ENCODE measurements at regions of chr17 and their contacts with region 1.

Region 1: DNA sequence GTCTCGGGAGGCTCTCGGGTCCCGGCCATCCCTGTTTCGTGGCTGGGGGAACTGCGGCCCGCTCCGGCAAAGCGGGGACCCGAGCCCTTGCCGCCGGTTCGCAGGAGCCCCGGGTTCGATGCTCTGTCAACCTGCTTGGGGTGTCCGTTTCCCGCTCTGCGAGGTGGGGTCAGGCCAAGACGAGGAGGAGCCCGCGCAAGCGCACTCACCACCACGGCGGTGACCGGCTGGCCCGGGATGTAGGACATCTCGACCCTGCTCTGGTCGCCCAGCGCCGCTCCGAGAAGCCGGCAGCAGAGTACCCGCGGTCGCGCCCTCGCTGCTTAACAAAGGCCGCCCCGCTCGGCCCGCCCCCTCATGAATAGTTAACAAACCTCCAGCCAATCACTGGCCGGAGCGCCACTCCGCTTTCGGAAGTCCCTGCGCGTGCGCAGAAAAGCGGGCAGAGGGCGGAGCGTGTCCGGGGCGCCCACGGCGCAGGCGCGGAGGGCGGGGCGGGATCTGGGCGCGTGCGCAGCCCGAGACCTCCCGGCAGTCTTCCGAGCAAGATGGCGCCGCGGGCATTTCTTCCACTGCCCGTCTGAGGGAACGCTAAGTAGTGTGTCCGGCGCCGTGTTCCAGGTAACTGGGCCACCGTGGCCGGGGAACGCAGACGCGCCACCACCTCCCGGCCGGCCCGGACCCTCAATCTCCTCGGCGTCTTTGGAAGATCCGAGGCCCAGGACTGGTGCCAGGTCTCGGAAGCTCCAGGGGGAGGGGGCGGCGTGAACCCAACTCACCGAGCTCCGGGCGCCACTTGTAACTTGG is at the starts of genes EMC6 and TAX1BP3:
- DNase-seq: peak; percentile 99 to 100
- ATAC-seq: peak; percentile 98
- H3K4me3 ChIP-seq: peak within 1 kb of the TSS; percentile 70 to 73
- H3K27ac ChIP-seq: peak within 1 kb of the TSS; percentile 92 to 96
- H3K4me1 ChIP-seq: peaks cover 0 to 2% of the 10 kb centered on the region in 2 donors
- H3K27me3 ChIP-seq: no peaks in the 10 kb centered on the region
- total RNA-seq, gene EMC6: 19.2 to 25.7 TPM
- total RNA-seq, gene TAX1BP3: 101 to 108 TPM

Region 2: DNA sequence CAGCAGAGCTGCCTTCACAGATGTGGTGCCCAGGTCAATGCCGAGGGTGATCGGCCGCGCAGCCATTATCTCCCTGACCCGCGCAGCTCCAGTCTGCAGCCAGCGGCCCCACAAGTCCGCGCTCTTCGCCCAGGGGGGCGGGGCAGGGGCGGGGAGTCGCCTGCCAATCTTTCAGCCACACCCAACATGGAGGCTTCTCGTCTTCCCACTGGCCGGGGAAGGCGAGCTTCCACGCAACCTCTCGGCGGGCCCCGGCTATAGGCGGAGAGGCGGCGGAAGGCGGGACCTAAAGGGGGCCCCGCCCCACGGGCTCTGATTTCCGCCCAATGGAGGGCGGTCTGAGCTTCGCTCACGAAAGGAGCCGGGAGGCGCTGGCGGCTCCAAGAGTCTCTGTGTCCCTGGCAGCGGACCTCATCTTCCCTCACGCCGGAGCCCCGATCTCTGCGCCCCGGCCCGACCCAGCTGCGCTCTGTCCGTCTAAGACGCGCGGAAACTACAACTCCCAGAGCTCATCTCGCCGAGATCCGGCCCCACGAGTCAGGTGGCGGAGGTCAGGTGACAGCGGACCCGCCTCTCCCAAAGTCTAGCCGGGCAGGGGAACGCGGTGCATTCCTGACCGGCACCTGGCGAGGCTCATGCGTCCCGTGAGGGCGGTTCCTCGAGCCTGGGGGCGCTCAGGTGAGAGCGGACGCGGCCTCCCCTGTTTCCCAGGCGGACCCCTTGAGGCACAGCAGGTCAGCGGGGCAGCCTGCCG is 32.2 kb before region 1 on chr17 and contains the starts of genes CTNS and SHPK:
- intact Hi-C with region 1: loop called in 1 of 2 experiments (anchors 1 kb)
- DNase-seq: peak; percentile 98
- ATAC-seq: peak; percentile 99
- H3K4me3 ChIP-seq: peak within 1 kb of the TSS; percentile 61 to 73
- H3K27ac ChIP-seq: peak within 1 kb of the TSS; percentile 47 to 95
- H3K4me1 ChIP-seq: no peaks in the 10 kb centered on the region
- H3K27me3 ChIP-seq: no peaks in the 10 kb centered on the region
- total RNA-seq, gene CTNS: 10.8 to 13.8 TPM
- total RNA-seq, gene SHPK: 7.4 to 15.8 TPM

Region 3: GRCh38 chr17:3723556-3724369 is 55.3 kb after region 1 on chr17 and contains the start of gene HASPIN:
- intact Hi-C with region 1: loop called in 1 of 2 experiments (anchors 5 kb)
- DNase-seq: peak; percentile 95 to 98
- ATAC-seq: peak; percentile 97
- H3K4me3 ChIP-seq: peak within 1 kb of the TSS; percentile 45 to 52
- H3K27ac ChIP-seq: peak within 1 kb of the TSS in 1 of 2 donors; percentile 28
- H3K4me1 ChIP-seq: no peaks in the 10 kb centered on the region
- H3K27me3 ChIP-seq: no peaks in the 10 kb centered on the region
- total RNA-seq, gene HASPIN: 0.13 to 0.27 TPM

Region 4: GRCh38 chr17:3913531-3914311 is 245.2 kb after region 1 on chr17:
- intact Hi-C with region 1: no loop called
- DNase-seq: peak; percentile 90 to 95
- ATAC-seq: peak; percentile 88
- H3K4me3 ChIP-seq: no peak overlapping the region
- H3K27ac ChIP-seq: no peak overlapping the region
- H3K4me1 ChIP-seq: no peaks in the 10 kb centered on the region
- H3K27me3 ChIP-seq: no peaks in the 10 kb centered on the region

Measured in aorta (tissue), 5 donors.